ENCODE measurements at regions of chr14 and their contacts with region 1.

Region 1: DNA sequence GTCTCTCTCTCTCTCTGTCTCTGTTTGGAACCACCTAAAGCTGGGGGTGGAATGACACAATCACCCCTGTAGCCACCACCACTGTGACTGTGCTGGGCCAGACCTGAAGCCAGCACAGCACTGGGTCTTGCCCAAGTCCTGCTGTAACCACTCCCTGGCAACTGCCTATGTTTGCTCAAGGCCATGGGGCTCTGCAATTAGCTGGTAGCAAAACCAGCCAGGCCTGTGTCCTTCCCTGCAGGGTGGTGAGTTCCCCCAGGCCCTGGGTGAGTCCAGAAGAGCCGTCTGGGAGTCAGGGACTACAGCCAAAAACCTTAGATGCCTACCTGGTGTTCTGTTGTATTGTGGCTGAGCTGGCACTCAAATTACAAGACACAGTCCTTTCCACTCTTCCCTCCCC is 50.8 kb downstream of the DGLUCY start:
- DNase-seq: peak; percentile 82 to 93
- ATAC-seq: peak; percentile 23 to 27
- H3K4me3 ChIP-seq: no peak overlapping the region
- H3K27ac ChIP-seq: peak overlapping the region; percentile 90 to 96 (median 94)
- H3K4me1 ChIP-seq: peaks cover 58 to 82% of the 10 kb centered on the region in 2 donors
- H3K27me3 ChIP-seq: no peaks in the 10 kb centered on the region
- CTCF ChIP-seq: no peak
- POLR2A ChIP-seq: no peak

Region 2: GRCh38 chr14:90580377-90581335 is 584.0 kb before region 1 on chr14:
- in situ Hi-C with region 1: no loop called
- intact Hi-C with region 1: loop called (anchors 10 kb)
- DNase-seq: no peak
- ATAC-seq: no peak
- H3K4me3 ChIP-seq: no peak overlapping the region
- H3K27ac ChIP-seq: peak overlapping the region; percentile 54 to 87 (median 76)
- H3K4me1 ChIP-seq: peaks cover 43 to 53% of the 10 kb centered on the region in 2 donors
- H3K27me3 ChIP-seq: no peaks in the 10 kb centered on the region
- CTCF ChIP-seq: no peak
- POLR2A ChIP-seq: no peak

Region 3: GRCh38 chr14:91119556-91120311 is 45.0 kb before region 1 on chr14:
- in situ Hi-C with region 1: no loop called
- intact Hi-C with region 1: loop called (anchors 2 kb)
- DNase-seq: peak; percentile 83 to 89
- ATAC-seq: peak; percentile 89 to 97
- H3K4me3 ChIP-seq: no peak overlapping the region
- H3K27ac ChIP-seq: peak overlapping the region; percentile 97 to 100 (median 100)
- H3K4me1 ChIP-seq: peaks cover 69 to 75% of the 10 kb centered on the region in 2 donors
- H3K27me3 ChIP-seq: no peaks in the 10 kb centered on the region
- CTCF ChIP-seq: no peak
- POLR2A ChIP-seq: peak; percentile 80

Region 4: DNA sequence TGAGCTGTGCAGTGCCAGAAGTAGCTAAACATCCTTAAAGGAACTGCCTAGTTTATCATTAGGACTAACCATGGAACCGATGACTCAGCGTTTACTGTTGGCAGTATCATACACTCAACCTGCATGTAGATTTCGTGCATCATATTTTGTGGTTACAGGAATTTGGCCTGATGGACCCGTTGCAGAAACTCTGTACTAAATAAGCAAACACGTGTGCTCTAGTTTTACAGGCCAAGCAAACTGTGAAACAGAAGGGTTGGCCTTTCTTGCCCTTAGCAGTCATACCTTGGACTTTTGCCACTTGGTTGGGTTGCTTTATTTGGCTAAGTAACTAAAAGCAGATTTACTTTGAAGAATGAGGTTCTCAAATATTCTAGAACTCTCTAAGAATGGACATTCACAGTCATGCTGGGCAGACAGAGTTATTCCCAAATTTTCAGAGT is 15.2 kb before region 1 on chr14:
- in situ Hi-C with region 1: no loop called
- intact Hi-C with region 1: loop called (anchors 2 kb)
- DNase-seq: peak; percentile 86 to 87
- ATAC-seq: peak; percentile 99 to 100
- H3K4me3 ChIP-seq: no peak overlapping the region
- H3K27ac ChIP-seq: peak overlapping the region; percentile 78 to 94 (median 84)
- H3K4me1 ChIP-seq: peaks cover 13 to 28% of the 10 kb centered on the region in 2 donors
- H3K27me3 ChIP-seq: no peaks in the 10 kb centered on the region
- CTCF ChIP-seq: no peak
- POLR2A ChIP-seq: no peak